Activated B cell treated with CpG ODN at 0.5 μM for 24 hours (primary cell): ENCODE measurements at regions of chr11 and their contacts with region 1.

Region 1: GRCh38 chr11:67665541-67666362 is 8.7 kb downstream of the ALDH3B2 start:
- DNase-seq: no peak
- ATAC-seq: no peak
- H3K4me3 Mint-ChIP-seq: no peak overlapping the region
- H3K27ac Mint-ChIP-seq: no peak overlapping the region
- H3K4me1 Mint-ChIP-seq: no peaks in the 10 kb centered on the region
- H3K27me3 Mint-ChIP-seq: no peaks in the 10 kb centered on the region
- CTCF ChIP-seq: no peak

Region 2: DNA sequence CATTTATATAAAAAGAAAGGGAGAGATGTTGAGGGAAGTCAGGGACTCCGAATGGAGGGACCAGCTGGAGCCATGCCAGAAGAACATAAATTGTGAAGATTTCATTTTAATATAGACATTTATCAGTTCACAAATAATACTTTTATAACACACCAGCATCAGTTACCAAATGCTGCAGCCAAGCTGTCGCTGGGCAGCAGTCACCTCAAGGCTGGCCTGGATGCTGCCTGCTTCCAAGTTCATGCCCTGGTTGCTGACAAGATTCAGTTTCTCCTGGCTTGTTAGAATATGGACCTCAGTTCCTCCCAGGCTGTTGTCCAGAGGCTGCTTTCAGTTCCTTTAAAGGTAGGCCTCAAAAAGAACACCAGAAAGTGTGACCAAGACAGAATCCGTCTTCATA is 39.5 kb after region 1 on chr11:
- CTCF ChIA-PET with region 1: no interaction called
- POLR2A ChIA-PET with region 1: no interaction called
- intact Hi-C with region 1: loop called (anchors 5 kb)
- DNase-seq: no peak
- ATAC-seq: no peak
- H3K4me3 Mint-ChIP-seq: no peak overlapping the region
- H3K27ac Mint-ChIP-seq: no peak overlapping the region
- H3K4me1 Mint-ChIP-seq: no peaks in the 10 kb centered on the region
- H3K27me3 Mint-ChIP-seq: peaks cover 19% of the 10 kb centered on the region
- CTCF ChIP-seq: no peak